ENCODE measurements at regions of chrX and their contacts with region 1.

Region 1: DNA sequence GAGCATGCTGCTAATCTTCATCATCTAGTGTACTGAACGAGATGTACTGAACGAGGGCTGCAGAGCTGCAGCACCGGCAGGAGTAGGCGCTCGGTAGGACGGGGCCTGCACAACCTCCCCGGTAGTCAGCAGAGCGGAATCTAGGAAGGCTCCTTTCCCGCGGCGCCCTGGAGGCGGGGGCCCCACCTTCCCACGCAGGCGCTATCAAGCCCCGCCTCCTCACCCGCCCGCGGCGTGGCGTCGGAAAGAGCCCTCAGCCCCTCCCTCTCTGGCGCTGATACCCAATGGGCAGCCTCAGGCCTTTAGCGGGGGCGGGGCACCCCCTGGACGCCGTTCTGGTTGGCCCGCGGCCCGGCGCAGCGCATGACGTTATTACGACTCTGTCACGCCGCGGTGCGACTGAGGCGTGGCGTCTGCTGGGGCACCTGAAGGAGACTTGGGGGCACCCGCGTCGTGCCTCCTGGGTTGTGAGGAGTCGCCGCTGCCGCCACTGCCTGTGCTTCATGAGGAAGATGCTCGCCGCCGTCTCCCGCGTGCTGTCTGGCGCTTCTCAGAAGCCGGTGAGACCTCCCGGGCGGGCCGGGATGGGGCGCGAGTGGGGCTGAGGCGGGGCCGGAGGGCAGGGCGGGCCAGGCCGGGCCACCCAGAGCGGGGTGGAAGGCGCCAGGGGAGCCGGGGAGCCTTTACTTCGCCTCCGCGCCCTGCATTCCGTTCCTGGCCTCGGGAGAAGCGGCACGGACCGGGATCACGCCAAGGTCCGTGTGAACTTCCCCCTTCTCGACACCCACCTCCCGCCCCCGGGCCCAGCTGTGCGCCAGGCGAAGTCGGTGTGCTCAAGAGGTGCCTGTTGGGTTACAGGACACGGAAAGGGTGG is at the start of gene PDHA1:
- DNase-seq: peak; percentile 95
- ATAC-seq: peak; percentile 99
- H3K4me3 Mint-ChIP-seq: peak within 1 kb of the TSS; percentile 79
- H3K27ac Mint-ChIP-seq: peak within 1 kb of the TSS; percentile 88
- H3K4me1 Mint-ChIP-seq: peaks cover 27% of the 10 kb centered on the region
- H3K27me3 Mint-ChIP-seq: no peaks in the 10 kb centered on the region
- total RNA-seq, gene PDHA1: 204 to 217 TPM

Region 2: GRCh38 chrX:18354369-18355223 is 989.2 kb before region 1 on chrX and contains the start of gene SCML2:
- CTCF ChIA-PET with region 1: no interaction called
- POLR2A ChIA-PET with region 1: no interaction called
- intact Hi-C with region 1: loop called in 1 of 2 experiments (anchors 1 kb)
- DNase-seq: peak; percentile 62
- ATAC-seq: peak; percentile 69
- H3K4me3 Mint-ChIP-seq: peak within 1 kb of the TSS; percentile 68
- H3K27ac Mint-ChIP-seq: no peak within 1 kb of the TSS
- H3K4me1 Mint-ChIP-seq: peaks cover 4% of the 10 kb centered on the region
- H3K27me3 Mint-ChIP-seq: peaks cover 2% of the 10 kb centered on the region
- total RNA-seq, gene SCML2: 2.9 to 3.1 TPM

Region 3: DNA sequence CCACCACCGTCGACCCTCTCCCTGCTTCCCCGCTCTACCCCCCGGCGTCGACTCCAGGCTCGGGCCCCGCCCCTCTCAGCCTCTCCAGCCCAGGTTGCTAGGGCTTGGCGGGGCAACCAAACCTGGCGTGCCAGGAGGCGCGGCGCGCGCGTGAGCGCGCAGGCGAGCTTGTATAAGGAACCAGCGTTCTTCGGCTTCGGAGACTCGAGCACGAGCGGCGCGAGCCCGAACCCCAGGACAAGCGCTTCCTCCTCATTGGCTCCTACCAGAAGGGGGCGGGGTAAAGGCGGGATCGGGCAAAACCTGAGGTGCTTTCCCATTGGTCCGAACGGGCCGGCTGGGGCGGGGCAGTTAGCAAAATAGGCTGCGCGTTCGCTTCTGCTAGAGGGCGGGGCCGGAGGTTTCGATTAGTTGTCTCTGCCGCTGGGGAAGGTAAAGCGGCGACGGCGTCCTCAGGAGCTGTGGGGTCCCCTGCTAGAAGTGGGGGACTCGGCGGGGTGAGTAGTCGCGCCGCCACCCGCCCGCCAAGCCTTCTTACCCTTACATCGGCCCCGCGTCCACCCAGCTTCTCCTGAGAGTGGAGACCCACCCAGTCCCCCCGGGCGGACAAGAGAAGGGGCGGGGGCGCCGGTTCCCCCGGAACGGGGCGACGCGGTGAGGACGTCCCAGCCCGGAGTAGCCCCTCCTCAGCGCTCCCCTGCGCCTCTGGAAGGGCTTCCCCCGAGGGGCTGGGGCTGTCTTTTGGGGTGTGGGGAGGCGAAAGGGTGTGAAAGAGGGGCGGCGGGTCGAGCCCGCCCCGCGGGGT is 918.4 kb before region 1 on chrX and contains the start of gene CDKL5:
- CTCF ChIA-PET with region 1: no interaction called
- POLR2A ChIA-PET with region 1: no interaction called
- intact Hi-C with region 1: loop called in 1 of 2 experiments (anchors 2 kb)
- DNase-seq: peak; percentile 97
- ATAC-seq: peak; percentile 96
- H3K4me3 Mint-ChIP-seq: peak within 1 kb of the TSS; percentile 79
- H3K27ac Mint-ChIP-seq: peak within 1 kb of the TSS; percentile 60
- H3K4me1 Mint-ChIP-seq: peaks cover 2% of the 10 kb centered on the region
- H3K27me3 Mint-ChIP-seq: peaks cover 2% of the 10 kb centered on the region
- total RNA-seq, gene CDKL5: 1.2 to 1.5 TPM

Region 4: DNA sequence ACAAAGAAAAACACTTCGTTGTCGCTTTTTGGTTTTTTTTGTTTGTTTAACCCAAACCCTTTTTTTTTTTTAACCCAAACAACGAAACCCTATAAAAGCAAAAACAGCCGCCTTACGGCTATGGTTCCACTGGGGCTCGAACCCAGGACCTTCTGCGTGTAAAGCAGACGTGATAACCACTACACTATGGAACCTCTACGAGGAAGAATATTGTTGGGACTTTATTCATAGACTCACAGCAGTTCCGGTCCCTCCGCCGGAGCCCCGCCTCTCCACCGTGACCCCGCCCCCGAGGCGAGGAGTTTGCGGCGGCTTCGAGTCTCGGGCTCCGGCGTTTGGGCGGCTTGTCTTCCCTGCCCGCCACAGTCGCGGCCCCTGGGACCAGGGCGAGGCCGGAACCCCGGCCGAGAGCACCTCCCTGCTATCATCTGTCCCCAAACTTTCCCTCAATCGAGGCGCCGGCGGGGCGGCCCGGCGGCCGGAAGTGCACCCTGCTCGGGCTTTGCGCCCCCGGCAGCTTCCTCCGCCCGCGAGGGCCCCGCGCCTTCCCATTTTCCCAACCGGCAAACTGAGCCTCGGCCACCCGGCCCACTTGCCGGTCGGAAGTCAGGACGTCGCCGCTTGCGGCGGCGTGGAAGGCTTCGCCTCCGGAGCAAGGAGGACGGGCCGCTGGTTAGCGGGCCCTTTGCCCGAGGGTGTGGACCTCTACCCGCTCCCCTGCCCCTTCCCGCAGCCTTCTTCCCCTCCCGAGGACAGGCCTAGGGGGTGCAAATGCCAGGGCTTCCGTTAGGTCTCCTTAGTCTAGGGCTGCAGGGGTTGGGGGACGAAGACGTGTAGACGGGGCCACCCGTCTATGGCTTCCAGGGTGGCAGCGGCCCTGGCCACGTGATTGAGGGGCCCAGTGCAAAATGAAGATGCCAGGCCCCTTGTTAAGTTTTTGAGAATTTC is 668.7 kb before region 1 on chrX:
- CTCF ChIA-PET with region 1: no interaction called
- POLR2A ChIA-PET with region 1: no interaction called
- intact Hi-C with region 1: loop called in 1 of 2 experiments (anchors 10 kb)
- DNase-seq: peak; percentile 82
- ATAC-seq: peak; percentile 81
- H3K4me3 Mint-ChIP-seq: peak overlapping the region; percentile 63
- H3K27ac Mint-ChIP-seq: peak overlapping the region; percentile 80
- H3K4me1 Mint-ChIP-seq: peaks cover 6% of the 10 kb centered on the region
- H3K27me3 Mint-ChIP-seq: no peaks in the 10 kb centered on the region

Region 5: DNA sequence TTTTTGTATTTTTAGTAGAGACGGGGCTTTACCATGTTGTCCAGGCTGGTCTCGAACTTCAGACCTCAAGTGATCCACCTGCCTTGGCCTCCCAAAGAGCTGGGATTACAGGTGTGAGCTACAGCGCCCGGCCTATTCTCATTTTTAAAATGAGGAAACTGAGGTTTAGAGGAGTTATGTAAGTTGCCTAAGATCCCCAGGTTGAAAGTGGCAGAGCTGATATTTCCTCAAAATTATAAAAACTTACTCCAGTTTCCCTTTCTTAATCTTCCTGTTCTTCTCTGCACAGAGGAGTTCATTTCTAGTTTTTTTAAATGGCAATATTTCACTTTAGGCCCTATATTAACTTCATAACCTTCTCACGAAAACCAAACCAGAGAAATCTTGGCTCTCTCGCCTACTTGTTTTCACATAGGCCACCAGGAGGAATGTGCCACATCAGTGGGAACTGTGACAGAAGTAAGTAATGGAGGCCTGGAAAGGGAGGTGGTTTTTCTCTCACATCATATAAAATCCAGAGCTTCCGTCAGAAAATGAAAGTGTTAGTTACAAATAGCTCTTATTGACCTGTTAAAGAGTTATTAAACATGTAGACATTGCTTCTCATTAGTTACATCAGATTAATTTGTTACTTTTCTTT is 655.8 kb before region 1 on chrX:
- CTCF ChIA-PET with region 1: no interaction called
- POLR2A ChIA-PET with region 1: no interaction called
- intact Hi-C with region 1: no loop called
- DNase-seq: no peak
- ATAC-seq: no peak
- H3K4me3 Mint-ChIP-seq: no peak overlapping the region
- H3K27ac Mint-ChIP-seq: no peak overlapping the region
- H3K4me1 Mint-ChIP-seq: no peaks in the 10 kb centered on the region
- H3K27me3 Mint-ChIP-seq: no peaks in the 10 kb centered on the region